Activated CD4-positive, alpha-beta T cell treated with anti-CD3 and anti-CD28 coated beads for 36 hours (primary cell): ENCODE measurements at regions of chr14 and their contacts with region 1.

Region 1: DNA sequence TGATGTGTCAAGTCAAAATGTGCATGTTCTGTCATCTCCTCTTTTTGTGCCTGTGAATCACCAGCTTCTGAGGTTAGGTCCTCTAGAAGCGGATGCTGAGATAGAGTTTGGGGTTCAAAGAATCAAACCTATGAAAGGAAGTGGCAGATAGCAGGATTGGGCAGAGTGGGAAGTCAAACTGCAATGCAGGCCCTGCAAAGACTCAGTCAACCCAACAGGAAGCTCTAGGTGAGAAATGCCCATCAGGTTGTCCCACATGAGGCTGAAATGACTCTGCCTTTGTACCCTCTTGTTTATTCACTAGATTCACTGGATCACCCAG is 4.5 kb upstream of the MIA2 start:
- DNase-seq: peak; percentile 76
- ATAC-seq: peak; percentile 97
- H3K4me3 Mint-ChIP-seq: no peak overlapping the region
- H3K27ac Mint-ChIP-seq: peak overlapping the region; percentile 94
- H3K4me1 Mint-ChIP-seq: peaks cover 47% of the 10 kb centered on the region
- H3K27me3 Mint-ChIP-seq: no peaks in the 10 kb centered on the region

Region 2: GRCh38 chr14:39102969-39103957 is 125.9 kb before region 1 on chr14 and contains the start of gene SEC23A:
- CTCF ChIA-PET with region 1: no interaction called
- POLR2A ChIA-PET with region 1: no interaction called
- intact Hi-C with region 1: loop called in 1 of 2 experiments (anchors 1 kb)
- DNase-seq: peak; percentile 90
- ATAC-seq: peak; percentile 92
- H3K4me3 Mint-ChIP-seq: peak within 1 kb of the TSS; percentile 93
- H3K27ac Mint-ChIP-seq: peak within 1 kb of the TSS; percentile 94
- H3K4me1 Mint-ChIP-seq: peaks cover 37% of the 10 kb centered on the region
- H3K27me3 Mint-ChIP-seq: no peaks in the 10 kb centered on the region
- total RNA-seq, gene SEC23A: 49.6 to 72.8 TPM

Region 3: GRCh38 chr14:39174560-39175444 is 54.4 kb before region 1 on chr14 and contains the start of gene PNN:
- CTCF ChIA-PET with region 1: interaction called, 4 read pairs
- POLR2A ChIA-PET with region 1: interaction called, 9 read pairs
- intact Hi-C with region 1: loop called (anchors 1 kb)
- DNase-seq: peak; percentile 97
- ATAC-seq: peak; percentile 91
- H3K4me3 Mint-ChIP-seq: peak within 1 kb of the TSS; percentile 96
- H3K27ac Mint-ChIP-seq: peak within 1 kb of the TSS; percentile 99
- H3K4me1 Mint-ChIP-seq: peaks cover 40% of the 10 kb centered on the region
- H3K27me3 Mint-ChIP-seq: no peaks in the 10 kb centered on the region
- total RNA-seq, gene PNN: 87.8 to 98.3 TPM

Region 4: DNA sequence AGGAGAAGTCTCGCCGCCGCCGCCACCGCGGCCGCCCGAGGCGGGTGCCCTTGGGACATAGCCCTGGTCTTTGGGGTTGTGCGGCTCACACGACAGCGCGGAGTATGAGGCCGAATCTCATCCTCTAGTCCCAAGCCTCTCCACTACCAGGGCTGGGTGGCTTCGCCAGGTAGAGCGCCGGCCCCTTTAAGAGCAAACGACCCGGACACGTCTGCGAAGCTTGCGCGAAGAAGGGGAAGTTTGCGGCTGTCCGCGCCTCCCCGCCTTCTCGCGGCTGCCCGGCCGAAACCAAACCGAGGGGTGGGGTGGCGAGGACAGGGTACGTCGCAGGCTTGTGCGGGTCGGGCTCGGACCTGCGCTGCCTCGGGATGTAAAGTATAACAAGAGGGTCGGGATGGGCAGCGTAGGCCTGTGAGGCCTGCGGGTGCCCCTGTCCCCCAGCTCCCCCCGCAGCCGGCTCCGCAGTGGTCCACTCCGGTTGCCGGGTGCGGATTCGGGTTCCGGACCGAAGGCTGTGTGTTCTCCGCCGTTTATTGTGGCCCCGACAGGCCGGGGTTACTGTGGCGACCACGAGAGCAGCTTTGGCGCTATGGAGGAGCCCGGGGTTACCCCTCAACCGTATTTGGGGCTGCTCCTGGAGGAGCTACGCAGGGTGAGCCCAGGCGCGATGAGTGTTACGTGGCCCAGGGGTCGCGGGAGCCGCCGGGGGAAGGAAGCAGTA is 37.8 kb after region 1 on chr14:
- CTCF ChIA-PET with region 1: interaction called, 4 read pairs
- POLR2A ChIA-PET with region 1: interaction called, 8 read pairs
- intact Hi-C with region 1: loop called (anchors 1 kb)
- DNase-seq: peak; percentile 77
- ATAC-seq: peak; percentile 63
- H3K4me3 Mint-ChIP-seq: peak overlapping the region; percentile 73
- H3K27ac Mint-ChIP-seq: peak overlapping the region; percentile 95
- H3K4me1 Mint-ChIP-seq: peaks cover 50% of the 10 kb centered on the region
- H3K27me3 Mint-ChIP-seq: no peaks in the 10 kb centered on the region

Region 5: DNA sequence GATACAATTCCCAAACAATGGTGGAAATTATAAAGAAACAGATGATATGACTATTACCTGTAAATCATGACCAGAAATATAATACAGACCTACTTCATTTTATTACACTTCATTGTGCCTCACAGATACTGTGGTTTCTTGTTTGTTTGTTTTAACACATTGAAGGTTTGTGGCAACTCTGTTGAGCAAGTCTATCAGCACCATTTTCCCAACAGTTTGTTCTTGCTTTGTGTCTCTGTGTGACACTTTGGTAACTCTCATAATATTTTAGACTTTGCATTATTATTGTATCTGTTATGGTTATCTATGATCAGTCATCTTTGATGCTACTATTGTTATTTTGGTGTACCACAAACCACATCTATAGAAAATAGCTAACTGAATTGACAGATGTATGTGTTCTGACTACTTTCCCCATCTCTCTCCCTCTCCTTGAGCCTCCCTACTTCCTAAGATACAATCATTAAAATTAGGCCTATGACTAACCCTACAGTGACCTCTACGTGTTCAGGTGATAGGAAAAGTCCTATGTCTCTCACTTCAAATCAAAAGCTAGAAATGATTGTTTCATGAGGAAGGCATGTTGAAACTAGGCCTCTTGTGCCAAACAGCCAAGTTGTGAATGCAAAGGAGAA is 154.0 kb after region 1 on chr14:
- CTCF ChIA-PET with region 1: interaction called, 4 read pairs
- POLR2A ChIA-PET with region 1: interaction called, 4 read pairs
- intact Hi-C with region 1: loop called (anchors 1 kb)
- DNase-seq: no peak
- ATAC-seq: peak; percentile 97
- H3K4me3 Mint-ChIP-seq: no peak overlapping the region
- H3K27ac Mint-ChIP-seq: no peak overlapping the region
- H3K4me1 Mint-ChIP-seq: peaks cover 31% of the 10 kb centered on the region
- H3K27me3 Mint-ChIP-seq: no peaks in the 10 kb centered on the region

Region 6: DNA sequence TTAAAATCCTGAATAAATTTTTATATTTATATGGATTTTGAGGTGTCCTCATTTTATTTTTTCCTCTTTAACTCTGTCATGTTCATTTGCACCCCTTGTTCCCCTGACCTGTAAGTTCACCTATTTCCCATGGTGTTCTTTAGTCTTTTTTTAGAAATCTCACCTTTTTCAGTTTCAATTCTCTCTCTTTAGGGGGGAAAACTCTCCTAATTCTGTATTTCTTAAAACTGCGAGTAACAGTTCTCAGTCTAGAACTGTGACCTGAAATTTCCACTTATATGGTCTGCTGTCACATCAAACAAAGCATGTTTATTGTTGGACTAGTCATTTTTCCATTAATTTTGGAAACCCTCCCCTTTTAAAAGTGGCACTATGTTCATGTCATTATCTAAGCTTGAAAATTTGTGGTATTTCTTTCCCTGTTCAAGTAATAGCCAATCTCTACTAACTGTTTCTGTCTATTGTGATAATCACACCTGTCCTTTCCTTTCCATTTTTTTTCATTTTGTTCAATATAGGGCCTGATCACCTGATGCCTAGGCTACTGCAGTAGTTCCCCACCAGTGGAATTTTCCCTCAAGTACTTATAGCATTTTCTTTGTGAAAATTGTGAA is 217.1 kb after region 1 on chr14:
- CTCF ChIA-PET with region 1: no interaction called
- POLR2A ChIA-PET with region 1: no interaction called
- intact Hi-C with region 1: no loop called
- DNase-seq: no peak
- ATAC-seq: peak; percentile 34
- H3K4me3 Mint-ChIP-seq: no peak overlapping the region
- H3K27ac Mint-ChIP-seq: peak overlapping the region; percentile 52
- H3K4me1 Mint-ChIP-seq: peaks cover 39% of the 10 kb centered on the region
- H3K27me3 Mint-ChIP-seq: no peaks in the 10 kb centered on the region